ENCODE measurements at regions of chr11 and their contacts with region 1.

Region 1: DNA sequence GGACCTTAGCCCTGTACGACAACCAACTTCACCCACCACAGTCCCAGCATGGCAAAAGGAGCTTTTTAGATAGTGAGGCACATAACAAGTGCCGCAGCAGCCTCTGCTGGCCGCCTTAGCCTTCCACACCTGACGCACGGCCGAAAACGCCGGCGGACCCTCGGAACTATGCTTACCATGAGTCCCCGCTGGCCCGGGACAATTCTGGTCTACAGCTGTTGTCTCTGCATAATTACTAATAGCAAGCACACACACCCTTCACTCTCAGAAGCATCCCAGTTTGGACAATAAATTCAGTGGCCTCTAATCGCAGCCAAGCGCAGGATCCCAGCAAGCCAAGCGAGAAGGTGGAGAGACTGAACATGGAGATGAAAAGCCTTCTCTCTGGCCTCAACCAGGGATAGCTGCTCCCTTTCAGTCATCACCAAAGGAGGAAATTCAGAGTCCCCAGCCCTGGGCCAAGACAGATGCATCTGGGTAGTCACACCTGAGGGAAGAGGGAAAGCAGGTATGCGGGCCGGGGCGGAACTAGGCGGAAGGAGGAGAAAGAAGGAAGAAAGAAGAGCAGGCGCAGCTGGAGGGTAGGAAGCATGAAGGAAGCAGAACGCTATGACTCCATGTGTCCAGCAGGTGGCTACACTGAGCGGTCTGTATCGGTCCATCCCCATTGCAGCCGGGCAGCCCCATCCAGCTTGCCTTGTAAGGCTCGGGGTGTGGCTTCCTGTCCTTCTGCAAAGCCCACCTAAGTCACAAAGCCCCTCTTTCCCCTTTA is 40.3 kb downstream of the BUD13 start:
- DNase-seq: peak; percentile 78
- ATAC-seq: peak; percentile 92
- H3K4me3 Mint-ChIP-seq: no peak overlapping the region
- H3K27ac Mint-ChIP-seq: no peak overlapping the region
- H3K4me1 Mint-ChIP-seq: peaks cover 11% of the 10 kb centered on the region
- H3K27me3 Mint-ChIP-seq: no peaks in the 10 kb centered on the region

Region 2: DNA sequence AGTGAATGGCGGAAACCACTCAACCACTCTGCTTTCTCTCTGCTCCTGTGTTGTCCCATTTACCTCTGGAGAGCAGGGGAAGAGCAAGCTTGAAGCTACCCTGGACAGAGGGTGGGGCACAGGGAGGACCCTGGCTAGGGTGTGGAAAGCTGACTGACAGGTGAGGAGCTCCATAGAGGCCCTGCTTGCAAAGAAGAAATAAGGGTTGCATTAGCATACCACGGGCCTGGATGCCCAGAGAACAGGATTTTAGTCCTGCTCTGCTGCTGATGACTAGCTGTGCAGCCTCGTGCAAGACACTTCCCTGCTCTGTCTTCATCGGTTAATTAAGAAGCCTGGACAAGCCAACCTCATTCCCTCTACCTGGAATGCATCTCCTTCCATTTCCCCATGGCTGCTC is 94.7 kb before region 1 on chr11:
- CTCF ChIA-PET with region 1: no interaction called
- POLR2A ChIA-PET with region 1: no interaction called
- intact Hi-C with region 1: no loop called
- DNase-seq: no peak
- ATAC-seq: no peak
- H3K4me3 Mint-ChIP-seq: no peak overlapping the region
- H3K27ac Mint-ChIP-seq: no peak overlapping the region
- H3K4me1 Mint-ChIP-seq: no peaks in the 10 kb centered on the region
- H3K27me3 Mint-ChIP-seq: peaks cover 9% of the 10 kb centered on the region

Region 3: GRCh38 chr11:116721988-116722387 is 10.5 kb before region 1 on chr11:
- CTCF ChIA-PET with region 1: interaction called, 10 read pairs
- POLR2A ChIA-PET with region 1: no interaction called
- intact Hi-C with region 1: no loop called
- DNase-seq: no peak
- ATAC-seq: no peak
- H3K4me3 Mint-ChIP-seq: no peak overlapping the region
- H3K27ac Mint-ChIP-seq: no peak overlapping the region
- H3K4me1 Mint-ChIP-seq: no peaks in the 10 kb centered on the region
- H3K27me3 Mint-ChIP-seq: no peaks in the 10 kb centered on the region

Region 4: DNA sequence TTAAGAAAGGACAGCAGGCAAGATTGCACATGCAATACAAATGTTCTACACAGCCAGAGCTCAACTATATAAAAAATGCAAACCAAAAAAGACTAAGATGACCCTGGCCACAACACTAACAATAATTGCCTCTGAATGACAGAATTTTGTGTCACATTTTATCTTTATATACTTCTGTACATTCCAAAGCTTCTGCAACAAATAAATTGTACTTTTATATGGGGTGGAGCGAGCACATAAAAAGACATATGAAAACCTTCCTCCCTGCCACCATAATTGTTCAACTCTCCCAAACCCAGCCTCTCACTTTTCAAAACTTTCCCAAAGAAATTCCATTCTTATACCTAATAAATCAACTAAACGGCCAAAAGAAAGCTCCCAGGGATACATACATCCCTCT is 29.7 kb after region 1 on chr11:
- CTCF ChIA-PET with region 1: interaction called, 10 read pairs
- POLR2A ChIA-PET with region 1: no interaction called
- intact Hi-C with region 1: no loop called
- DNase-seq: no peak
- ATAC-seq: no peak
- H3K4me3 Mint-ChIP-seq: no peak overlapping the region
- H3K27ac Mint-ChIP-seq: no peak overlapping the region
- H3K4me1 Mint-ChIP-seq: peaks cover 9% of the 10 kb centered on the region
- H3K27me3 Mint-ChIP-seq: no peaks in the 10 kb centered on the region

Region 5: DNA sequence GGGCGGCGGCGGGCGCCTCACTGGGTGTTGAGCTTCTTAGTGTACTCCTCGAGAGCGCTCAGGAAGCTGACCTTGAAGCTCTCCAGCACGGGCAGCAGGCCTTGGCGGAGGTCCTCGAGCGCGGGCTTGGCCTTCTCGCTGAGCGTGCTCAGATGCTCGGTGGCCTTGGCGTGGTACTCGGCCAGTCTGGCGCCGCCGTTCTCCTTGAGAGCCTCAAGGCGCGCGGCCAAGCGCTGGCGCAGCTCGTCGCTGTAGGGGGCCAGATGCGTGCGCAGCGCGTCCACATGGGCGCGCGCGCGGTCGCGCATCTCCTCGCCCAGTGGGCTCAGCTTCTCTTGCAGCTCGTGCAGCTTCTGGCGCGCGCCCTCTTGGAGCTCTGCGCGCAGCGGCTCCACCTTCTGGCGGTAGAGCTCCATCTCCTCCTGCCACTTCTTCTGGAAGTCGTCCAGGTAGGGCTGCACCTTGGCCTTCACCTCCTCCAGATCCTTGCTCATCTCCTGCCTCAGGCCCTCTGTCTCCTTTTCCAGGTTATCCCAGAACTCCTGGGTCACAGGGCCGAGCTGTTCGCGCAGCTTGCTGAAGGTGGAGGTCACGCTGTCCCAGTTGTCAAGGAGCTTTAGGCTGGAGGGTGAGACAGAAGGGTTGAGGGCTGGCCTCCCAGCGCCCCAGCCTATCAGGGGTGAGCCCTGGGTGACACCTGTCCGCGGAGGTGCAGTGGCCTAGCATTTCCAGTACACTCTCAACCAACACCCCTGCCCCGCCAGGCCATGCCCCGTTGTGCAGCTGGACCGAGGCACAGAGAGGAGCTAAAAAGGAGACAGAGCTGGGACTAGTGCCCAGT is 103.6 kb after region 1 on chr11:
- CTCF ChIA-PET with region 1: interaction called, 20 read pairs
- POLR2A ChIA-PET with region 1: no interaction called
- intact Hi-C with region 1: loop called (anchors 2 to 5 kb)
- DNase-seq: peak; percentile 90
- ATAC-seq: peak; percentile 95
- H3K4me3 Mint-ChIP-seq: peak overlapping the region; percentile 59
- H3K27ac Mint-ChIP-seq: peak overlapping the region; percentile 31
- H3K4me1 Mint-ChIP-seq: peaks cover 11% of the 10 kb centered on the region
- H3K27me3 Mint-ChIP-seq: peaks cover 3% of the 10 kb centered on the region

Region 6: GRCh38 chr11:117226388-117227385 is 494.2 kb after region 1 on chr11:
- CTCF ChIA-PET with region 1: interaction called, 6 read pairs
- POLR2A ChIA-PET with region 1: no interaction called
- intact Hi-C with region 1: loop called in 1 of 2 experiments (anchors 2 kb)
- DNase-seq: peak; percentile 59
- ATAC-seq: peak; percentile 52
- H3K4me3 Mint-ChIP-seq: no peak overlapping the region
- H3K27ac Mint-ChIP-seq: peak overlapping the region; percentile 25
- H3K4me1 Mint-ChIP-seq: peaks cover 30% of the 10 kb centered on the region
- H3K27me3 Mint-ChIP-seq: no peaks in the 10 kb centered on the region

Measured in activated CD4-positive, alpha-beta T cell treated with anti-CD3 and anti-CD28 coated beads for 36 hours (primary cell).